ENCODE measurements at regions of chr11 and their contacts with region 1.

Region 1: DNA sequence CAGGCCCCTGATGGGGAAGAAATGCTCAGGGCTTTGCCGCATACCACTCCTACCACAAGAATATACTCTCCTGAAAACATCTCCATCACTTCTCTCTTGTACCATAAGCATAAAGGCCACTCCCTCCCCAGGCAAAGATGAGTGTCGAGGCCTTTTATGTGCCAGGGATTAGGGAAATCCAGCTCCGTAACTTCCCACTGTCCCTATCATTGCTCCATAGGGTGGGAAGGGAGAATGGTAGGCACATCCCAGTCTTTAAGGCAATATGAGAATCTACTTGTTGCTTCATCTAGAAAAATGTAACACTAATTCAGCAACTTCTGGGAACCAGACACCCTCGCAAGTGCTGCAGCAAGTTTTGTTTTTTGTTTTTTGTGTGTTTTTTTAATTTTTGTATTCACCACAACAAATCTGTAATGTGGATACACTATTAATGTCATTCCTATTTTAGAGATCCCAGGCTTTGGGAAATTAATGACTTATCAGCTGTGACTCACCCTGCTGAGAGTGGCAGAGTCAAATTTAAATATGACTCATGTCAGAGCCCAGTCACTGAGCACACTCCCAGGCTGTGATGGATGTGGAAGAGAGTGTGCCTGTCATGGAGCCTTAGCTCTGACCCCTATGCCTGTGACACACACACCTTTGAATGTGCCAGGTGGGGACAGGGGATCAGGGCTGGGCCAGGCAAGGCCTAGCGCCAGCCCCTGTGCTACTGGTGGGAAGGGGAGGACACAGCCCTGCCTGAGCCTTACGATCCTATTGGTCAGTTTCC is 23.4 kb downstream of the PANX1 start:
- DNase-seq: no peak
- CTCF ChIP-seq: no peak

Region 2: DNA sequence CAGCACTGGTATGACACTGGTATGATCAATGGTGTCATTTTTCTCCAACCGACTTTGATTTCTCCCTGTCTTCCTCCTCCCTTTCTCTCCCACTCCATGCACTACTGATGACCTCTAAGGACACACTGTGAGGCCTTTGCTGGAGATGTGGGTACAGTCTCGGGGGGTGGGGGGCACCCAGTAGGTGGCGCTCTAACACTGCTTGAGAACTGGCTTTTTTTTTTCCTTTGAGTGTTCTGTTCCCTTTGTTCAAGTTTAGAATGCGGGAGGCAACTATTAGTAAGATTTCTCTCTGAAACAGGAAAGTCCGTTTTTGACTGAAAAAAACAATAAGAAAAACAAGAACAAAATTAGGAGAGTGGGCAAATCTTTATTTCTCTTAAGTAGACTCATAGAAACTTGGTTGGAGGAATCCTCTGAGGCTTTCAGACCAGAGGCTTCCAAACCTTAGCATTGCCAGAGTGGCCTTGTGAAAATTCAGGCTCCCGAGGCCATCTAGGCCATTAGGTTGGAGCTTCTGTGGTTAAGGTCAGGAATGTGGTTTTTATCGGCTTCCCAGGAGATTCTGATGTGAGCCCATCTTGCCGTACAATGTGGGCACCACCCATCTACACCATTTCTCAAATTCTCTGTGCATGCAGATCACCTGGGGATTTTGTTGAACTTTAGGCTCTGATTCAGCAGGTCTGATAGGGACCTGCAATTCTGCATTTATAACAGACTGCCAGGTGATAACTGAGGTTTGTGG is 19.8 kb after region 1 on chr11:
- CTCF ChIA-PET with region 1: interaction called, 10 read pairs
- POLR2A ChIA-PET with region 1: no interaction called
- DNase-seq: peak; percentile 46
- CTCF ChIP-seq: peak; percentile 82

Region 3: DNA sequence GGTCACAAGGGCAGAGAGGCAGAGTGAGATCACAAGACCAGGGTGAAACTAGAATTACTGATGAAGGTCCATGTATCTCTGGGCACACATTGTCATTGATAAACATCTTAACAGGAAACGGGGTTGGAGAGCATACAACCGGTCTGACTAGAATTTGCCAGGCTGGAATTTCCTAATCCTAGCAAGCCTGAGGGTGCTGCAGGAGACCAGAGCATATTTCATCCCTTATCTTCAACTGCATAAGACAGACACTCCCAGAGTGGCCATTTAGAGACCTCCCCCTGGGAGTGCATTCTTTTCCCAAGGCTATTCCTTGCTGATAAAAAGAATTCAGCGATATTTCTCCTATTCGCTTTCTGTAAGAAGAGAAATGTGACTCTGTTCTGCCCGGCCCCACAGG is 67.7 kb after region 1 on chr11:
- CTCF ChIA-PET with region 1: no interaction called
- POLR2A ChIA-PET with region 1: no interaction called
- DNase-seq: no peak
- CTCF ChIP-seq: no peak

Measured in GM10248 (cell line).